ENCODE measurements at regions of chr17 and their contacts with region 1.

Region 1: DNA sequence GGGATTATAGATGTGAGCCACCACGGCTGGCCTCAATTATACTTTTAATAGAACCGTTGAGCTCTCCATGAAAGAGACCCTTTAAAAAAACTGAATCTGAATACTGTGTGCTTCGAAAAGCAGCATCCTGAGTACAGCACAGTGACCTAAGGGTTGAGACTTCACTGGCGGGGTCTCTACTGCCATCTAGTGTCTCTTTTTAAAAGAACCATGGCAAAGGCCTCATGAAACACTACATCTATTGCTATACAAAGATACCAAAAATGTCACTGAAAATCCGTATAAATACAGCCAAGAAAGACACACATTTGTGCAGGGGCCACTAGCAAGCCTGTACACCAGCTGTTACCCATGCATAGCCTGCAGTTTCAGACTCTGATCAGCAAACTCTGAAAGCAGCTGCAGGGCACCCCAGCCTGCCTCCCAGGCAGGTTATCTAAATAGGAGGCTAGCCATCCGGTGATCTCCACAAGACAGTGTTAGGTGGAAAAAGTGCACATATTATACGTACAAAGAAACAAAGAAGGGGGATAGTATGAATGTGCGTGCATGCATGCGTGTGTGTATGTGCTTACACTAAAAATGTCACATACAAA is 35.3 kb downstream of the NPLOC4 start:
- DNase-seq: no peak
- H3K4me3 ChIP-seq: no peak overlapping the region
- H3K27me3 ChIP-seq: no peaks in the 10 kb centered on the region
- CTCF ChIP-seq: peak; percentile 81

Region 2: GRCh38 chr17:81253358-81254131 is 348.1 kb before region 1 on chr17:
- CTCF ChIA-PET with region 1: interaction called, 11 read pairs
- POLR2A ChIA-PET with region 1: no interaction called
- DNase-seq: no peak
- H3K4me3 ChIP-seq: no peak overlapping the region
- H3K27me3 ChIP-seq: no peaks in the 10 kb centered on the region
- CTCF ChIP-seq: peak; percentile 73

Region 3: DNA sequence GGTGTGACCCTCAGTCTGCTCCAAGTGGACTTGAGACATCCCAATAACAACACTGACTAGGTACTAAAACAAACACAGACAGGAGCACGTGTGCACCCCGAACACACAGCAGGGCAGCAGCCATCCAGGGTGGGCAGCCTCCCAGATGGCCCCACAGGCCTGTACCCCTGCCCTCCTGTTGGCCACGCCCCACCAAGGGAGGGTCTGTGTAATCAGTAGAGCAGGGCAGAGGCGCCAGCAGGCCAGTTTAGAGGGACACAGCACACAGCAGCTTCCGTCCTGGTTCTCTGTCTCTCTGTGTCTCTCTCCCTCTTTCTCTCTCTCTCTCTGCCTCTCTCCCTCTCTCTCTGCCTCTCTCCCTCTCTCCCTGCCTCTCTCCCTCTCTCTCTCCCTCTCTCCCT is 110.4 kb before region 1 on chr17:
- CTCF ChIA-PET with region 1: no interaction called
- POLR2A ChIA-PET with region 1: no interaction called
- DNase-seq: no peak
- H3K4me3 ChIP-seq: no peak overlapping the region
- H3K27me3 ChIP-seq: peaks cover 4% of the 10 kb centered on the region; the same call in 1 of the 2 replicates
- CTCF ChIP-seq: no peak

Region 4: GRCh38 chr17:81519284-81519955 is 82.2 kb before region 1 on chr17:
- CTCF ChIA-PET with region 1: interaction called, 30 read pairs
- POLR2A ChIA-PET with region 1: no interaction called
- DNase-seq: no peak
- H3K4me3 ChIP-seq: peak overlapping the region; percentile 42
- H3K27me3 ChIP-seq: no peaks in the 10 kb centered on the region
- CTCF ChIP-seq: peak; percentile 30; the same call in 1 of the 2 replicates

Region 5: DNA sequence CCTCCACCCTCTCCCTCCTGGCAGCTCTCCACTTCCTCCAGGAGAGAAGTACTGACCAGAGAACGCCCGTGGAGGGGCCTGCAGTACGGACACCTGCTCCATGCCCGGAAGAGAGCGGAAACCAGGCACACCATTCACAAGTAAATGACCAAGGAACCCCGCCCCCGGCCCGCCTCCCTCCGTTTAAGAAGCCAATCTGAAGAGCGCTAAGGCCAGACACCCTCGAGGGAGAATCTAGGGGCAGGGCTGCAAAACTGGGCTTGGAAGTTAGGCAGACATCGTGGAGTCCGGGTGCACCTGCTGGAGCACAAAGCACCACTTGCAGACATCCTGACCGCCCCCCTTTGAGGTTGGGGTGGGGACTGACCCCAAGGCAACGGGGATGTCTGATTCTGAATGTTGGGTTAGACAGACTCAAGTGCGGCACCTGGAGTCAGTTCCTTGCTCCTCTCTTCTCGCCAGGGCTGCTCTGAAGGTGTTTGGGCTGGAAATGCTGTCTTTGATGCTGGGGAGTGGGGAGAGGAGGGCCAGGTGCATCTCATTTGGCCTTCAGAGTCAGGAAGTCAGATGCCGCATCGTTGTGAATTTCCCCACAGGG is 48.5 kb before region 1 on chr17:
- CTCF ChIA-PET with region 1: interaction called, 35 read pairs
- POLR2A ChIA-PET with region 1: no interaction called
- DNase-seq: no peak
- H3K4me3 ChIP-seq: peak overlapping the region; percentile 95
- H3K27me3 ChIP-seq: no peaks in the 10 kb centered on the region
- CTCF ChIP-seq: peak; percentile 11; the same call in 1 of the 2 replicates

Region 6: DNA sequence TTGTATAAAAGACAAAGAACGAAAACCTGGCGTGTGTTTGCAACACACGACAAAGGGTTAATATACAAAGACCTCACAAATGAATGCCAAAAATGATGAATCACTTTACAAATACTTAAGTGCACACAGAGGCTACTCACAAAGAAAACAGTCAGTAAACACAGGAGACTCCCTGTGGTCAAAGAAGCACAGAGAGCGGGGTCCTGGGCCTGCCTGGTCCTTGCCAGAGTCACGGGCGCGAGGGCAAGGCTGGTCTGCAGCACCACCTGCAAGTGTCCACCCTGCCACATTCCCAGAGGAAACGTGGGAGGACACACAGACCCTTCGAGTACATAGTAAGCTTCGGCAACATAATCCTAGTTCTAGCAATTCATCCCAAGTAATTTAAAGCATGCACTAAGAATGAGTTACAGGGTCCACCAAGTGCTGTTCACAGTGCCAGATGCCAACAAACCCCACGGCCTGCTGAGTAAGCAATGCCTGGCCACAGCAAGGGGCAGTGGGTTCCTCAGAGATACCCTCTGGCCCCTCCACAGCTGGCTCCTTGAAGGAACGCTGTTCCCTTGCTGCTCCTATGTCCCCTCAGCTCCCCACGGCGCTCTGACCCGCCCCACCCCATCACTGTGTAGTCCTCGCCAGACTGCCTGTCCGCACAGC is 24.9 kb before region 1 on chr17:
- CTCF ChIA-PET with region 1: interaction called, 18 read pairs
- POLR2A ChIA-PET with region 1: no interaction called
- DNase-seq: no peak
- H3K4me3 ChIP-seq: no peak overlapping the region
- H3K27me3 ChIP-seq: no peaks in the 10 kb centered on the region
- CTCF ChIP-seq: 0 out of 2 replicates have a peak, but pooled peaks have one; percentile 17

Region 7: DNA sequence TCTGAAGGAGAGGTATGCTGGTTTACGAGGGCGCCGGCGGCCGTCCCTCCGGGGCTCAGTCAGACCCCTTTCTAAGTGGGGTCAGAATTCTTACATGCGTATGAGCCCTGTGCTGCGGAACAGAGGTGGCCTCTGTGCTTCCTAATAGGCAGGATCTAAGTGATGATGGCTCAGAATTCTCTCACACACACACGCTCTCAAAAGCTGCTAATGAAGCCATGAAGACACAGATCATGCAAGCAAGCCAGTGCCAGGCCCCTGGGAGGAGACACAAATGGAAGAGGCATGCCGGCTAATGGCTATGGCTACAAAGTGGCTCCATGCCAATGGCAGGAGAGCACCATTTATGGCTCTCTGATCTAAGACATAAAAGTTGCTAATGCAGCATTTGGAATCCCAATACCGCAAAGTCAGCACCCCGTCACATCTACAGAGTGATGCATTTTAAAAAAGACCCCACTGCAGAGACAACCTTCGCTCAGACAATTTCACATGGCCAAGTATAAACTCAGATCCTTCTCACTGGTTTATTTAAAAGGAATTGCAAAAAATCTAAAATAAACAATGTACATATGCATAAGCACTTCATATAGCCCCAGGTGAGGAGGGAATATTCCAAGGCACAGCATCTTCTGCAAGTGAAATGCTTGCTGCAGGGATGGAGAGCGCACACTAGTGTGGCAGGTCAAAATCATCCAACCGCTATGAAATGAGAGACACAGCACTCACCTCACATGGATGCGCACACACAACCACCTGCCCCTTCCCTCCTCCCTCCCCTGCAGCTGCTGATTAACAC is 10.7 kb after region 1 on chr17:
- CTCF ChIA-PET with region 1: interaction called, 22 read pairs
- POLR2A ChIA-PET with region 1: interaction called, 4 read pairs
- DNase-seq: no peak
- H3K4me3 ChIP-seq: no peak overlapping the region
- H3K27me3 ChIP-seq: no peaks in the 10 kb centered on the region
- CTCF ChIP-seq: no peak

Region 8: GRCh38 chr17:81733507-81734404 is 132.1 kb after region 1 on chr17:
- CTCF ChIA-PET with region 1: no interaction called
- POLR2A ChIA-PET with region 1: no interaction called
- DNase-seq: no peak
- H3K4me3 ChIP-seq: no peak overlapping the region
- H3K27me3 ChIP-seq: no peaks in the 10 kb centered on the region; the same call in none of the 2 replicates
- CTCF ChIP-seq: peak; percentile 90

Measured in BJ (cell line).